GM23248 (cell line): ENCODE measurements at regions of chr7 and their contacts with region 1.

Region 1: GRCh38 chr7:134669845-134670373 is 23.3 kb downstream of the BPGM start:
- DNase-seq: peak; percentile 85
- H3K4me3 ChIP-seq: peak overlapping the region; percentile 44
- H3K27ac ChIP-seq: peak overlapping the region; percentile 37
- H3K4me1 ChIP-seq: peaks cover 16% of the 10 kb centered on the region
- H3K27me3 ChIP-seq: no peaks in the 10 kb centered on the region

Region 2: DNA sequence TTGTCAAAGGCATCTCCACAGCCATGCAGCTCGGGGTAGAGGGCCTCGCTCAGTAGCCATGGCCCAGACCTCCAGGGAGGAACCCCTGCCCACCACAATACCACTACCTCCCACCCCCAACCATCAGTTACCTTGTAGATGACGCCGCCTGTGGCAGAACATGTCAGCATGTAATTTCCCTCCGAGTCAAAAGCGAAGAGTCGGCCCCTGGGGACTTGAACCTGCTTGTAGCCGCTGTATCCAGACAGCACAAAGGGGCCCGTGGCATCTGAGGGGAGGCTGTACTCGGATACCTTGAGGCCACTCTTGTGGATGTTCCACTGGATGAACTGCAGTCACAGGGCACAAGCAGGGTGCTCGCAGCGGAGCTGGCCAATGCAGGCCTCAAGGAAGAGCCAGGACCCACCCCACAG is 516.9 kb after region 1 on chr7:
- in situ Hi-C with region 1: loop called (anchors 25 kb)
- DNase-seq: no peak
- H3K4me3 ChIP-seq: no peak overlapping the region
- H3K27ac ChIP-seq: no peak overlapping the region
- H3K4me1 ChIP-seq: no peaks in the 10 kb centered on the region
- H3K27me3 ChIP-seq: no peaks in the 10 kb centered on the region